CD4-positive, alpha-beta memory T cell (primary cell): ENCODE measurements at regions of chr6 and their contacts with region 1.

Region 1: GRCh38 chr6:117602151-117602898 is at the start of gene GOPC:
- DNase-seq: peak; percentile 94 to 98 (median 97)
- H3K4me3 ChIP-seq: peak within 1 kb of the TSS; percentile 53 to 87
- H3K4me3 Mint-ChIP-seq: peak within 1 kb of the TSS; percentile 96 to 100 (median 100)
- H3K27ac ChIP-seq: peak within 1 kb of the TSS; percentile 75
- H3K27ac Mint-ChIP-seq: peak within 1 kb of the TSS; percentile 93 to 100 (median 99)
- H3K4me1 ChIP-seq: peaks cover 38% of the 10 kb centered on the region
- H3K4me1 Mint-ChIP-seq: peaks cover 34 to 52% (median 43%) of the 10 kb centered on the region in 4 donors
- H3K27me3 ChIP-seq: no peaks in the 10 kb centered on the region
- H3K27me3 Mint-ChIP-seq: peaks cover 0 to 3% of the 10 kb centered on the region in 2 donors
- total RNA-seq, gene GOPC: 37.7 to 37.8 TPM

Region 2: GRCh38 chr6:116570856-116571682 is 1031.3 kb before region 1 on chr6 and contains the start of gene RWDD1:
- CTCF ChIA-PET with region 1: no interaction called
- POLR2A ChIA-PET with region 1: interaction called, 3 read pairs
- intact Hi-C with region 1: loop called (anchors 2 kb)
- DNase-seq: peak; percentile 98 to 99 (median 99)
- H3K4me3 ChIP-seq: peak within 1 kb of the TSS; percentile 68 to 86
- H3K4me3 Mint-ChIP-seq: peak within 1 kb of the TSS; percentile 98 to 99 (median 99)
- H3K27ac ChIP-seq: peak within 1 kb of the TSS; percentile 96
- H3K27ac Mint-ChIP-seq: peak within 1 kb of the TSS; percentile 98 to 100 (median 99)
- H3K4me1 ChIP-seq: peaks cover 44% of the 10 kb centered on the region
- H3K4me1 Mint-ChIP-seq: peaks cover 22 to 57% (median 39%) of the 10 kb centered on the region in 4 donors
- H3K27me3 ChIP-seq: no peaks in the 10 kb centered on the region
- H3K27me3 Mint-ChIP-seq: no peaks in the 10 kb centered on the region
- total RNA-seq, gene RWDD1: 32.6 to 34.4 TPM

Region 3: GRCh38 chr6:117449549-117450439 is 152.5 kb before region 1 on chr6:
- CTCF ChIA-PET with region 1: interaction called, 100 read pairs
- POLR2A ChIA-PET with region 1: interaction called, 14 read pairs
- intact Hi-C with region 1: loop called (anchors 1 kb)
- DNase-seq: peak; percentile 57 to 65 (median 63)
- H3K4me3 ChIP-seq: no peak overlapping the region
- H3K4me3 Mint-ChIP-seq: no peak overlapping the region
- H3K27ac ChIP-seq: no peak overlapping the region
- H3K27ac Mint-ChIP-seq: no peak overlapping the region
- H3K4me1 ChIP-seq: no peaks in the 10 kb centered on the region
- H3K4me1 Mint-ChIP-seq: no peaks in the 10 kb centered on the region
- H3K27me3 ChIP-seq: peaks cover 12% of the 10 kb centered on the region
- H3K27me3 Mint-ChIP-seq: peaks cover 11 to 18% of the 10 kb centered on the region in 2 donors

Region 4: GRCh38 chr6:117555882-117556498 is 46.3 kb before region 1 on chr6:
- CTCF ChIA-PET with region 1: interaction called, 34 read pairs
- POLR2A ChIA-PET with region 1: interaction called, 55 read pairs
- intact Hi-C with region 1: loop called (anchors 1 kb)
- DNase-seq: peak; percentile 41 to 58 (median 55)
- H3K4me3 ChIP-seq: no peak overlapping the region
- H3K4me3 Mint-ChIP-seq: peak overlapping the region in 1 of 8 donors; percentile 25
- H3K27ac ChIP-seq: no peak overlapping the region
- H3K27ac Mint-ChIP-seq: no peak overlapping the region
- H3K4me1 ChIP-seq: peaks cover 6% of the 10 kb centered on the region
- H3K4me1 Mint-ChIP-seq: peaks cover 1 to 5% (median 3%) of the 10 kb centered on the region in 4 donors
- H3K27me3 ChIP-seq: no peaks in the 10 kb centered on the region
- H3K27me3 Mint-ChIP-seq: no peaks in the 10 kb centered on the region

Region 5: GRCh38 chr6:117674991-117675657 is 72.8 kb after region 1 on chr6 and contains the start of gene NUS1:
- CTCF ChIA-PET with region 1: interaction called, 8 read pairs
- POLR2A ChIA-PET with region 1: interaction called, 6 read pairs
- intact Hi-C with region 1: loop called (anchors 1 kb)
- DNase-seq: peak; percentile 97
- H3K4me3 ChIP-seq: peak within 1 kb of the TSS; percentile 81 to 84
- H3K4me3 Mint-ChIP-seq: peak within 1 kb of the TSS; percentile 89 to 96 (median 93)
- H3K27ac ChIP-seq: peak within 1 kb of the TSS; percentile 67
- H3K27ac Mint-ChIP-seq: peak within 1 kb of the TSS; percentile 85 to 97 (median 95)
- H3K4me1 ChIP-seq: peaks cover 37% of the 10 kb centered on the region
- H3K4me1 Mint-ChIP-seq: peaks cover 38 to 64% (median 52%) of the 10 kb centered on the region in 4 donors
- H3K27me3 ChIP-seq: no peaks in the 10 kb centered on the region
- H3K27me3 Mint-ChIP-seq: no peaks in the 10 kb centered on the region
- total RNA-seq, gene NUS1: 33.0 to 33.2 TPM